Prostate gland (tissue), 2 donors: ENCODE measurements at regions of chr4 and their contacts with region 1.

Region 1: GRCh38 chr4:119025916-119026661 is 109.5 kb upstream of the MYOZ2 start:
- DNase-seq: peak; percentile 50
- H3K4me3 ChIP-seq: no peak overlapping the region
- H3K27ac ChIP-seq: peak overlapping the region; percentile 78 to 79
- H3K4me1 ChIP-seq: no peaks in the 10 kb centered on the region
- H3K27me3 ChIP-seq: no peaks in the 10 kb centered on the region
- CTCF ChIP-seq: no peak
- POLR2A ChIP-seq: no peak

Region 2: DNA sequence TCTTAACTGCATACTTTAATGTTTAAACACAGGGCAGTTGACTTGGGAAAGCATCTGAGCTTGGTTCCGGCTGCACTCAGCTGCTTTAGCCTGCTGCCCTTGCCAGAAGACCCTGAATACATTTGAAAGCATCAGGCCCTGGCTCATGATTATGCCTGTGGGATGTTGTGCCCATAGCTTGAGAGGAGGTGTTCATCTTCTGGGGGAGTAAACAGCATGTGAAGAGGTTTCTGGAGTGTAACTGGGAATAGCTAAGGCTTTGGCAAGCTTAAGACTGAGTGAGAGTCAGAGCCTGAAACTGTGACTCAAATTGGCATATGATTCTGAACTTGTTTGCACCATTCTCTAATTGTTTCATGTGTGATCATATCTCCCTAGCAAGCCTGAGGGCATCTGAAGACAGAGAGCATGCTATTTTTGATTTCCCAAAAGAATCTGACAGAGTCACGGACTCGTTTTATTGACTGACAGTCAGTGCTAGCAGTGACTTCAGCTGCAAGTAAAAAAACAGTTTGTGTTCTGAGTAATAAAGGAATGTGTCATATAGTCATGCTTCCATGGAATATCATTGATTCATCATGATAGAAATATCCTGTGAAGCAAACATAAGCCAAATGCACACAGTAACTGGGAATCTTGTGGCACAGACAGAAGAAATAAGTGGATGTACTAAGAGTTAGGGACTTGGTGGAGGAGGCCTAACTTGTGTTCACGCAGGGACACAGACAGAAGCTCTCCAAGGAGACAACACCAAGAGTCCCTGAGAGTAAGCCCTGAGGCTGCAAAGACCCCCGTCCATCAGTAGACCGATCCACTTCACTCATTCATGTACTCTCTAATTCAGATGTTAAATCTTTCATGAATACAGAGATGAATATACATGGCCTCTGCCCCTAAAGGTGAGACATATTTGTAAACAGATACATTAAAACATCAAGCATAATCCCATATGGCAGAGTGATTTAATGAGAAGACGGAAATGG is 36.7 kb before region 1 on chr4:
- intact Hi-C with region 1: loop called (anchors 5 kb)
- DNase-seq: no peak
- H3K4me3 ChIP-seq: no peak overlapping the region
- H3K27ac ChIP-seq: peak overlapping the region; percentile 63 to 70
- H3K4me1 ChIP-seq: peaks cover 2% of the 10 kb centered on the region
- H3K27me3 ChIP-seq: no peaks in the 10 kb centered on the region
- CTCF ChIP-seq: no peak
- POLR2A ChIP-seq: no peak

Region 3: DNA sequence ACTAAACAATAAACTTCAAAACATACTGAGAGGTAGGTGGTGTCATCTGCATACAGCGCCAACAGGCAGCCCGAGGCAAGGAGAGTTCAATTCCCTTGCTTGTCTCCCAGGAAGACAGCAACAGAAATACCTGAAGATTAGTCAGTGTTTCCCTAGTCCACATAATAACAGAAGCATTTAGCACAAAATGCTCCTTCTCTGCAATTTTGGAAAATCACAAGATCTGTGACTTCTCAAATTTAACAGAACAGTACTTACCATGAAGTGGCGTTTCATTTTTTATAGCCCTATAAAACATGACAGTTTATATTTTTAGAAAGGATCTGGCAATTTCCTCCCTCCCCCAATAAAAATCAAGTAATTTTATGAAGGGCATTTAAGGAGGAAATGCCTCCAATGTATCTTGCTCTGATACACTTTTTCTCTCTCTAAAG is 42.5 kb after region 1 on chr4:
- intact Hi-C with region 1: no loop called
- DNase-seq: no peak
- H3K4me3 ChIP-seq: no peak overlapping the region
- H3K27ac ChIP-seq: peak overlapping the region in 1 of 2 donors; percentile 31
- H3K4me1 ChIP-seq: no peaks in the 10 kb centered on the region
- H3K27me3 ChIP-seq: no peaks in the 10 kb centered on the region
- CTCF ChIP-seq: no peak
- POLR2A ChIP-seq: no peak